ENCODE measurements at regions of chr4 and their contacts with region 1.

Region 1: DNA sequence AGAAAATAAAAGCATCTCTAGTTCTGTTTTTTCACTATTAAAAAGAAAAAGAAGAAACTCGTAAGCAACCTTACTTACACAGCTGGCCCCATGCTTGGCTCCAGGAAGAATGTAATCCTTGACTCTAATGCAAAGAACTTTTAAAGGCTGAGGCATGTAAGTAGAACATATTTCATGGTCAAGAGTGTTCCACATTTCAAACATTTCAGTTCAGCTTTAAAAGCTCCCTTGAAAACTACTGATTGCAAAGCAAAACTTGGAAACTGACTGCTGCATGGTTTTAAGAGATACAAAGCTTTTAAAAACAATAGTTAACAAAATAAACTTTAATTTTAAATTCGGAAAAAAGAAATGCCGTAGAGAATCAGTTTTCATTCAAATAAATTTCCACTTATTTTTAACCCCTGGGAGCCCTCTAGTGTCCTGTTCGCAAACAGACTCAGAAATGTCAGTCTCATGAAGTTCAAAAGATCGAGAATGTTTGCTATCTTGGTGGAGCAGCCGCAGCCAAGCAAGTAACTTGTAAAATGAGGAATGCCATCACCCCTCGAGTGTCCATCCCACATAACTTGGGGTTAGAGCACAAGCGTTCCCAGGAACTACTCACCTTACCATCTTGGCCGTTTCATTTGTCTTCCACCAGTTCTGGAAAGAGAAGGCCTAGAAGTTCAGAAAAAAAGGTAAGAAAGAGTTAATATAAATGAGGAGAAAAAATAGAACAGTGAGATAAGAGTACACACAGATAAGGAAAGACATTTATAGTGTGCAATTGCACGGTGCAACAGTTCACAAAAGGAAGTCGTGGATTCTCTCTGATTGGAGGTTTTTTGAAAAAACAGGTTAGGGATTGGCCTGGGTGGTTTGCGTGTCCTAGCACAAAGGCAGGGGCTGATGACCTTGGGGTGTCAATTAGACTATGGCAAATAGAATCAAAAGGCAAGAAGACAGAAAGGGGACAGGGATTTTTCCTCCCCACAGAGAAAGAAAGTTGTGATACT is at the start of gene GASK1B:
- DNase-seq: no peak
- ATAC-seq: no peak; the same call in 1 of the 2 replicates
- H3K4me3 ChIP-seq: peak within 1 kb of the TSS in 1 of 2 experiments; percentile 27; a peak in 2 of 4 replicates
- H3K27ac ChIP-seq: no peak within 1 kb of the TSS
- H3K4me1 ChIP-seq: peaks cover 3% of the 10 kb centered on the region; the same call in 1 of the 2 replicates
- H3K27me3 ChIP-seq: no peaks in the 10 kb centered on the region
- CTCF ChIP-seq: peak; percentile 73
- total RNA-seq, gene GASK1B: 1.1 TPM

Region 2: GRCh38 chr4:157217708-157218107 is 954.9 kb before region 1 on chr4:
- CTCF ChIA-PET with region 1: no interaction called
- POLR2A ChIA-PET with region 1: no interaction called
- in situ Hi-C with region 1: no loop called
- intact Hi-C with region 1: loop called (anchors 5 kb)
- DNase-seq: no peak
- ATAC-seq: no peak
- H3K4me3 ChIP-seq: no peak overlapping the region
- H3K27ac ChIP-seq: no peak overlapping the region
- H3K4me1 ChIP-seq: no peaks in the 10 kb centered on the region
- H3K27me3 ChIP-seq: no peaks in the 10 kb centered on the region
- CTCF ChIP-seq: peak; percentile 45; the same call in 1 of the 2 replicates

Region 3: GRCh38 chr4:157992038-157992705 is 180.4 kb before region 1 on chr4:
- CTCF ChIA-PET with region 1: interaction called, 5 read pairs
- POLR2A ChIA-PET with region 1: no interaction called
- in situ Hi-C with region 1: no loop called
- intact Hi-C with region 1: loop called (anchors 1 kb)
- DNase-seq: no peak
- ATAC-seq: no peak
- H3K4me3 ChIP-seq: no peak overlapping the region; a peak in 1 of 4 replicates
- H3K27ac ChIP-seq: no peak overlapping the region
- H3K4me1 ChIP-seq: no peaks in the 10 kb centered on the region; the same call in 1 of the 2 replicates
- H3K27me3 ChIP-seq: no peaks in the 10 kb centered on the region
- CTCF ChIP-seq: peak; percentile 50; the same call in 1 of the 2 replicates

Region 4: DNA sequence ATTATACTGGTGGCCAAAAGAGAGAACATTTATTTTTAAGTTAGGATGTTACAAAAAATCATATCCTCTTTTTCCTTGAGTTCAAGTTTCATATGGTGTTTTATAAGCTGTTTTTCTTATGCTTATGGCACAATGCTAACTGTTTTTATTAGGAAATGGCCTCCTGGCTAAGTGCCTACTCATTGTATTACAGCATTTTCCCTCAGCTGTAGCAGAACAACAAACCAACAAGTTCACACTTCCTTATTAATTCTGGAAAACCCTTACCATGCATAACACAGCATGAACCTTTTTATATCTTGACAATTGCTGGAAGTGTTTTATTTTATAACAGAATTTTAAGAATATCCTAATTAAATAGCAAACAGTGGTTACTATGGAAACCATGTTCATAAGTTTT is 165.6 kb before region 1 on chr4:
- CTCF ChIA-PET with region 1: no interaction called
- POLR2A ChIA-PET with region 1: no interaction called
- in situ Hi-C with region 1: no loop called
- intact Hi-C with region 1: no loop called
- DNase-seq: no peak
- ATAC-seq: no peak
- H3K4me3 ChIP-seq: no peak overlapping the region
- H3K27ac ChIP-seq: no peak overlapping the region
- H3K4me1 ChIP-seq: no peaks in the 10 kb centered on the region
- H3K27me3 ChIP-seq: no peaks in the 10 kb centered on the region
- CTCF ChIP-seq: no peak

Measured in Panc1 (cell line).